ENCODE measurements at regions of chr11 and their contacts with region 1.

Region 1: DNA sequence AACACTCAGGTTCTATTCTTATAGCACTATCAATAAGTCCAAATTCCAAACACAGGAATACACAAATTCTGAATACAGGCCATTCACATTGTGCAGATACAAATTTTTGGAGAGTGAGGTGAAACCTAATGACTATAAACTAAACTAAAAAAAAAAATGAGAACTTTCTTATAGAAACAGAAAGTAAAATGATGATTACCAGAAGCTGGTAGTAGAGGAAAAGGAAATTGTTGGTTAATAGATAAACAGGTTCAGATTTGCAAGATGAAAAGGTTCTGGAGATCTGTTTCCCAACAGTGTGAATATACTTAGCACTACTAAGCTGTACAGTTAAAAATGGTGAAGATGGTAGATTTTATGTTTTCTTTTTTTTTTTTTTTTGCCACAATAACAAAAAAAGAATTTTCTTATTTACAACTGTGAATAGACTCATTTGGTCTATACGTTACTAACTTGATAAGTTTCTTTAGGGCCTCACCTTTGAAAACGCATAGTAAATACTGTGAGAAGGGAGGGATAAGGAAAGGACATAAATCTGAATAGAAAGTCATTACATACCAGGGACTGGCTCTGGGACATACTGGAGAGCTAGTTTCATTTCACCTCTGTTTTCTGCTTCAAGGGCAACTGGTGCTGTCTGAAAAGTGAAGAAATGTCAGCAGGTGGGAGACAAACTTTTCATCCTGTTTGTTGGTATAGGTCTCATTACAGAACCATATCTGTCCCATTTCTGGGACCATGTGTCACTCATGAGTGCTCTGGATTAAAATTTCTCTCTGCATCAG is 14.2 kb upstream of the CCDC89 start:
- DNase-seq: no peak
- H3K4me3 ChIP-seq: no peak overlapping the region
- H3K27ac ChIP-seq: no peak overlapping the region
- H3K4me1 ChIP-seq: no peaks in the 10 kb centered on the region
- H3K27me3 ChIP-seq: no peaks in the 10 kb centered on the region
- CTCF ChIP-seq: no peak
- POLR2A ChIP-seq: no peak

Region 2: DNA sequence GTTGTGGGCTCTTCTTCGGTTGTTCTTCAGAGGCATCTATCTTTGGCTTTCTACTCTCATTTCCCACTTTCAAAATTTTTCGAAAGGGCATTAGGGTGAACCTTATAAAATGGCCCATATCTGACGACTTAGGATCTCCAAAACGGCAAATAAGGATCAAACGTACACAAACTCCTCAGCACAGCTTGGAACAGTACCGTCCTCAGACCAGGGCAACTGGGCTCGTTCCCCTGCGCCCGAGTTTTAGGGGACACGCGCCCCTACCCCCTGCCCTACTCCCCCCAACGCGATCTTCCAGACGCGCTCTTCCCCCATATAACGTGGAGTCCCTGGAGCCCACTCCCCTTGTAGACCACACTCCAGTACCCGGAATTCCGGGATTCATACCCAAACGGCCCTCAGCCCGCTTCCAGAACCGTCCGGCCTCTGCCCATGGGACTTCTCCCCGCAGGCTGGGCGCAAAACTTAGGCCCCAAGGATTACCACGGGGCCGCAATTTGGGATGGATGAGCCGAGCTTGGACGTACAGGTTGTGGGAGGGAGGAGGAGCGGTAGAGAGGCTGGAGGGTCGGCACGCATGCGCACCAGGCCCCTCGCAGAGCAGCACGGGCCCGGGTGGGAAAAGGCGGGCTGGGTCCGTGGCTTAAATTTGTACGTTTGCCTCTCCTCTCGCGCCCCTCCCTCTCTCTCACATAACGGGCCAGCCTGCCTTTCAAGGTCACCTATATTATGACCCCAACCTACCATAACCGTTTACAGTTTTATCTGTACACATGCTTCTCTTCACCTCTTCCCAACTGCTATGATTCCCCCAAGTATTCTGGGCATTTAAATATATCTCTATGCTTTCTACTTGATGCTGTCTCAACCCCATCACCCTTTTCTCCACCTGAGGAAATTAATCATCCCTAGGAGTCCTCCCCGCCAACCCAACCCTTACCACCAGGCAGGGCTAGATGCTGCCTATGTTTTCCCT is 17.5 kb before region 1 on chr11:
- CTCF ChIA-PET with region 1: interaction called, 12 read pairs
- POLR2A ChIA-PET with region 1: no interaction called
- dilution Hi-C with region 1: no loop called
- intact Hi-C with region 1: no loop called
- DNase-seq: peak; percentile 57
- H3K4me3 ChIP-seq: peak overlapping the region; percentile 46 to 68 (median 66)
- H3K27ac ChIP-seq: peak overlapping the region; percentile 15
- H3K4me1 ChIP-seq: peaks cover 4% of the 10 kb centered on the region
- H3K27me3 ChIP-seq: peaks cover 9 to 25% of the 10 kb centered on the region in 2 experiments
- CTCF ChIP-seq: no peak
- POLR2A ChIP-seq: peak; percentile 44

Measured in endothelial cell of umbilical vein (primary cell).